ENCODE measurements at regions of chr17 and their contacts with region 1.

Region 1: DNA sequence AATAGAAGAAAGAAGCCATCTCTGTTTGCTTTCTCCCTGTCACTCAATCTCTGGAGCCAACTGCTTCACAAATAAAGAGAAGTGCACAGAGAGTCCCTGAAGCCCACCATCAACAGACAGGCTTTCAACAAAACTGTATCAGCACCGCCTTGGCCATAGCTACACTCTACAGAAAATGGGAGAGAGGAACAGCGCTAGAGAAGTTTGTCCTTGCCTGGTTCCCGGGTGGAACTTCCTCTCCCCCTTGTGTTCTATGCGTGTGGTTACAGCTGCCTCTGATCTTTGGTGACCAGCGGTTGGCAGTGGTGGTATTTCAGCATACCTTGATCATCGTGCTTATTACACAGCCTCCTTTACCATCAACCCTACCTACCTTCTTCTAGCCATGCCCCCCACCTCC is 91.4 kb upstream of the CCL2 start:
- DNase-seq: no peak
- H3K4me3 ChIP-seq: no peak overlapping the region
- H3K27ac ChIP-seq: no peak overlapping the region
- H3K4me1 ChIP-seq: no peaks in the 10 kb centered on the region
- H3K27me3 ChIP-seq: no peaks in the 10 kb centered on the region
- CTCF ChIP-seq: peak; percentile 17

Region 2: GRCh38 chr17:33779225-33779591 is 384.4 kb before region 1 on chr17:
- intact Hi-C with region 1: loop called (anchors 5 kb)
- DNase-seq: peak; percentile 30
- H3K4me3 ChIP-seq: no peak overlapping the region
- H3K27ac ChIP-seq: no peak overlapping the region
- H3K4me1 ChIP-seq: no peaks in the 10 kb centered on the region
- H3K27me3 ChIP-seq: no peaks in the 10 kb centered on the region
- CTCF ChIP-seq: peak; percentile 99

Region 3: DNA sequence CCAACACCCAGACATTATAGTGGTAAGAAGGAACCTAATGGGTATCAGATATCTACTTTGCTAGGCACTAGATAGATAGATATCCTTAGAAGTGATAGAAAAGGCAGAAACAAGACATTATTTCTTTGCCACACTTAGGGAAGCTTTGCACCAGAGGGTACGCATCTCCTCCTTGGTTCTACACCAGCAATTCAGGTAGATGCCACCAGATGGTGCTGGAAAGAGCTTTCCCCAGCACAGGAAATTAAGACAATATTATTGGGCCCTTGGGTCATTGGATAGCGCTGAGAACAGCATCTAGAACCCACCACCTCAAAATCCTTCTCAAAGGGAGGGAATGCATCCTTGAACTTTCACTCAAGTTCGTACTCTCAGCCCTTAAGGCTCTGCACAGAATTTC is 82.4 kb before region 1 on chr17:
- intact Hi-C with region 1: no loop called
- DNase-seq: no peak
- H3K4me3 ChIP-seq: no peak overlapping the region
- H3K27ac ChIP-seq: no peak overlapping the region
- H3K4me1 ChIP-seq: no peaks in the 10 kb centered on the region
- H3K27me3 ChIP-seq: no peaks in the 10 kb centered on the region
- CTCF ChIP-seq: no peak

Measured in colonic mucosa (tissue), 4 donors.